Pancreas (tissue), 10 donors: ENCODE measurements at regions of chr22 and their contacts with region 1.

Region 1: DNA sequence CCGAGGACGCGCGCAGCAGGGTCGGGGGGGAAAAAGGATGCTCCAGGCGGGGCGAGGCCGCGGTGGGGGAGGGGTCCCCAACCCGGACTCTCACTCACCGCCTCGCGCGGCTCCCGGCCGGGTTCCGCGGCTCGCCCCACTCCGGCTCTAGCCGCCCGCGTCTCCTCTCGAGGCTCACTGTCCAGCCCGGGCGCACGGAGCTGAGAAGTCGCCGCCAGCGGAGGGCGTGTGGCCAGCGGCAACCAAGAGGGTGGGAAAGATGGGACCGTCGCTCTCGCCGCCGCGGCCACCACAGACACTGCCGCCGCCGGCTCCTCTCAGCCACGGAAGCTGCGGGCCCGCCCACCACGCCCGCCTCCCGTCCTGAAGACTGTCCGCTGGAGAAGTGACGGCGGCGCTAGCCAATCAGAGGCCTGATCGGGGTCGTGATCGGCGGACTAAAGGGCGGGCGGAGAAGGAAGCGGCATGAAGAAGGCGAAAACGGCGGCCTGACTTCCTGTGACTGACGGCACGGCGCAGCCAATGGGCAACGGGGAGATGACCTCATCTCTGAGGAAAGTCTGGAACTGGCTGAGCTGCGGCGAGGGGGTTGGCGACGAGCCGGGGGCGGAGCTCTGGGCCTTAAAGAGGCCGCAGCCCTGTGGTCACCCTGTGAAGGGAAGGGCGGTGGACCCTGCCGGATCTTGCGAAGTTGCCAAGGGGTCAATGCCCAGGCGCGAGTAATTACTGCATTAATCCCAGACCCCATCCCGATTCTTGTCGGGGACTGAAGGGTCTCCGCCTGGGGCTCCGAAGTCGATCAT is at the start of gene MRTFA:
- DNase-seq: peak; percentile 97 to 100 (median 100)
- ATAC-seq: peak; percentile 93 to 97 (median 94)
- H3K4me3 ChIP-seq: peak within 1 kb of the TSS; percentile 96 to 99 (median 98)
- H3K27ac ChIP-seq: peak within 1 kb of the TSS; percentile 78 to 93 (median 83)
- H3K4me1 ChIP-seq: peaks cover 0 to 10% (median 4%) of the 10 kb centered on the region in 3 donors
- H3K27me3 ChIP-seq: no peaks in the 10 kb centered on the region
- CTCF ChIP-seq: no peak
- total RNA-seq, gene MRTFA: 15.2 to 35.3 (median 24.1) TPM

Region 2: DNA sequence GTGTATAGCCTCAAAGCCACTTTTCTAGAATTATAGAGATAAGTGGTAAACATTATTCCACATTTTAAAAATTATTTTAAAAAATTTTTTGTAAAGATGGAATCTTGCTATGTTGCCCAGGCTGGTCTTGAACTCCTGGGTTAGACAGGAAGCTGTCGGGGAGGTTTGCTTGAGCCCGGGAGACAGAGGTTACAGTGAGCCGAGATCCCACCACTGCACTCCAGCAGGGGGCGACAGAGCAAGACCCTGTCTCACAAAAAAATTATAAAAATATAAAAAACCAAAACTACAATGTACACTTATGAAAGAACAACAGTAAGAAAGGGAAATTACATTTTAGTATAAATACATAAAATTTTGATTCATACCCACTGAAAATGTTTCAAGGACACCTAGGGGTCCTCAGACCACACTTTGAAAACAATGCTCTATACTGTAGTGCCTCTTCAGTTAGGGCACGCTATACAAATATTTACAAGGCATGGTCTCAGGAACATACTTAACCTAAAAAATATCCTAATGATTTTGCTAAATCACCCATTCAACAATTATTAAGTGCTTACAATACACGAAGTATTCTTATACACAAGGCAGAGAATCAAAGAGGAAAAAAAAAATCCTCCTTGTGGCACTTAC is 111.2 kb before region 1 on chr22:
- intact Hi-C with region 1: loop called in 2 of 3 experiments (anchors 10 kb)
- DNase-seq: peak in 5 of 6 donors; percentile 20 to 69 (median 39)
- ATAC-seq: peak; percentile 62 to 76 (median 74)
- H3K4me3 ChIP-seq: no peak overlapping the region
- H3K27ac ChIP-seq: no peak overlapping the region
- H3K4me1 ChIP-seq: peaks cover 5 to 14% (median 6%) of the 10 kb centered on the region in 3 donors
- H3K27me3 ChIP-seq: no peaks in the 10 kb centered on the region
- CTCF ChIP-seq: peak; percentile 40 to 61 (median 51)

Region 3: GRCh38 chr22:40603088-40603605 is 33.4 kb before region 1 on chr22:
- intact Hi-C with region 1: no loop called
- DNase-seq: no peak
- ATAC-seq: peak; percentile 36 to 69 (median 52)
- H3K4me3 ChIP-seq: no peak overlapping the region
- H3K27ac ChIP-seq: no peak overlapping the region
- H3K4me1 ChIP-seq: peaks cover 32 to 46% (median 36%) of the 10 kb centered on the region in 3 donors
- H3K27me3 ChIP-seq: no peaks in the 10 kb centered on the region
- CTCF ChIP-seq: no peak